ENCODE measurements at regions of chr19 and their contacts with region 1.

Region 1: GRCh38 chr19:14505488-14506432 is 9.8 kb upstream of the GIPC1 start:
- DNase-seq: peak; percentile 97 to 100
- H3K4me3 ChIP-seq: peak overlapping the region; percentile 45; the same call in 1 of the 2 replicates
- H3K27ac ChIP-seq: peak overlapping the region; percentile 99
- H3K4me1 ChIP-seq: peaks cover 84% of the 10 kb centered on the region
- H3K27me3 ChIP-seq: no peaks in the 10 kb centered on the region
- CTCF ChIP-seq: peak; percentile 99

Region 2: GRCh38 chr19:13195678-13196077 is 1310.1 kb before region 1 on chr19:
- CTCF ChIA-PET with region 1: interaction called, 13 read pairs
- POLR2A ChIA-PET with region 1: no interaction called
- intact Hi-C with region 1: no loop called
- DNase-seq: peak; percentile 29 to 41
- H3K4me3 ChIP-seq: no peak overlapping the region
- H3K27ac ChIP-seq: no peak overlapping the region
- H3K4me1 ChIP-seq: peaks cover 8% of the 10 kb centered on the region
- H3K27me3 ChIP-seq: no peaks in the 10 kb centered on the region
- CTCF ChIP-seq: peak; percentile 50

Region 3: GRCh38 chr19:13846557-13847406 is 659.0 kb before region 1 on chr19:
- CTCF ChIA-PET with region 1: no interaction called
- POLR2A ChIA-PET with region 1: no interaction called
- intact Hi-C with region 1: loop called (anchors 2 kb)
- DNase-seq: peak; percentile 93 to 97
- H3K4me3 ChIP-seq: peak overlapping the region; percentile 77
- H3K27ac ChIP-seq: peak overlapping the region; percentile 97
- H3K4me1 ChIP-seq: peaks cover 70% of the 10 kb centered on the region
- H3K27me3 ChIP-seq: no peaks in the 10 kb centered on the region
- CTCF ChIP-seq: no peak

Region 4: DNA sequence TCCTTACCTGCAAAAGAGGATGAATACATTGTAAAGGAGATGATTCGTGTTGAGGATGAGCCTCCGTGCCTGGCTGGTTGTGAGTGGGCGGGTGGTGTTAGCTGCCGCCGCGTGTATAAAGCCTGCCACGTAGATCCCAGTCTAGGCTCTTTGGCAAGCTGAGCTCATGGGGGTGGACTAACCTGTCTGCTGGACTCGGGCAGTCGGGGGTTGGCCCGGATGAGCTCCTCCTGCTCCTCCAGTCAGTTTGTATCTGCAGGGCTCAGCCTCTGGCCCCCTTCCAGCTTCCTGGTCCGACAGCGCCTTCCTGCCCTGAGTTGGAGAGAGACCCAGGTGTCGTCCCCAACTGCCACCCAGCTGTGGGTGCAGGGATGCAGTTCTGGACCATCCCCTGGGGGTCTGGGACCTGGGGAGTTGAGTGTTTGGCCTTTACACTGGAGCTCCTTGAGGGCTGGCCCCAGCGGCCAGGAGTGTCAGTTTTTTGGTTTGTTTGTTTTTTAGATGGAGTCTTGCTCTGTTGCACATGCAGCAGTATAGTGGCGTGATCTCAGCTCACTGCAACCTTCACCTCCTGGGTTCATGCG is 44.5 kb after region 1 on chr19:
- CTCF ChIA-PET with region 1: interaction called, 11 read pairs
- POLR2A ChIA-PET with region 1: interaction called, 39 read pairs
- intact Hi-C with region 1: no loop called
- DNase-seq: peak; percentile 34 to 83
- H3K4me3 ChIP-seq: no peak overlapping the region
- H3K27ac ChIP-seq: no peak overlapping the region
- H3K4me1 ChIP-seq: peaks cover 16% of the 10 kb centered on the region
- H3K27me3 ChIP-seq: no peaks in the 10 kb centered on the region
- CTCF ChIP-seq: no peak

Measured in PC-9 (cell line).